ENCODE measurements at regions of chr2 and their contacts with region 1.

Region 1: DNA sequence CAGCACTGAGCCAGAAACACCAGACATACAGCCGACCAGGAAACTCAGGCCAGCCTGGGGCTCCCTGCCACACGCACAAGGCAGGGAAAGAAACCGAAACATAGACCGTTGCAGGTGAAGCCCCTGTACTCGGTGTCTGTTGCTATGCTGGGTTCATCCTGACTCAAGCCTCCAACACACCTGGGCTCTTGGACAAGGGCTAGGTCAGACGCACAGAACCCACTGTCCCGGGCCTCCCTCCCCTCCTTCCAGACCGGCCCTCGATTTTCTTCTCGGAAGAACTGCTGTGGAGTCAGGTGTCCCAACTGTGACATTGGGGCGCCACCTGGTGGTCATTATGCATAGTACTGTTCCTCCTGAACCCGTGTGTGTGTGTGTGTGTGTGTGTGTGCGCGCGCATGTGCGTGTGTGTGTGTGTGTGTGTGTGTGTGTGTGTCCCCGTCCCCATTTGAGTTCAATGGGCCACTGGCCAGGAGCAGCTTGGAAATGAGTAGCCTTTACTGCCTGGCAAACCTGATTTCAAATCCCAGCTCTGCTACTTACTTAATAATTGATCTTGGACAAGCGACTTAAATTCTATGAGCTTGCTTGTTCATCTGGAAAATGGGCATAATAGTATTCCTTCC is 55.4 kb upstream of the GLI2 start:
- DNase-seq: peak; percentile 57 to 87
- ATAC-seq: peak; percentile 83

Region 2: GRCh38 chr2:120343433-120344105 is 336.7 kb before region 1 on chr2:
- intact Hi-C with region 1: loop called (anchors 2 to 5 kb)
- DNase-seq: peak; percentile 53 to 71
- ATAC-seq: peak; percentile 81

Measured in left colon (tissue), 2 donors.